ENCODE measurements at regions of chr16 and their contacts with region 1.

Region 1: GRCh38 chr16:75110637-75111513 is 5.7 kb downstream of the LDHD start:
- DNase-seq: peak; percentile 89
- ATAC-seq: peak; percentile 59 to 72

Region 2: GRCh38 chr16:74813109-74813641 is 297.7 kb before region 1 on chr16:
- intact Hi-C with region 1: loop called in 1 of 2 experiments (anchors 10 kb)
- DNase-seq: peak; percentile 72
- ATAC-seq: peak; percentile 98 to 100

Region 3: DNA sequence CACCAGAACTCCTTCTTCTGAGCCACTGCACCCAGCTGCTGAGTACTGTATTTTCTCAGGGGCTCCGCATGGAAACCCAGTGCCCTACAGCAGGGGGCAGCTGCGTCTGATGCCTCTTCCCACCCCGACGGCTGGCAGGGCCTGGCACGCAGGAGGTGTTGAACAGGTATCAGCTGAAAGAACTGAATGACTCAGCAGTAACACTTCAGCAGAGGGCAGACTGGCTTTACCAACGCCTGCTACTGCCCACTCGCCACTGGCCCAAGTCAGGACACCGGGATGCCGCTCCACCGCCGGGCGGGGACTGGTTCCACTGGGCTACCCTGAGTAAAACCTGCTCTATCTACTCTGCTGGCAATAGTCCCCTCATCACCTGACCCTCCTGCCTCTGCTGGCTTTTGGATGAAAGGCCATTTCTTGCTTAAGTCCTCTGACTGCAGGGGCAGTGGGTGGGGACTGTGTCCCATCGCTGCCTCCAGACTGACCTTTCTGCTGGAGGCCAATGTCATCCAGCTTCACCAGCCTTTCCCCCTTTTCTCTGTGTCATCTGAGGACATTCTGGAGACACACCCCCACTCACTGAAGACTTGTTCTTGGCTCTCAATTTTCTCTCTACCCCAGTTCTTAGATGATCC is 235.8 kb before region 1 on chr16:
- intact Hi-C with region 1: loop called in 1 of 2 experiments (anchors 10 kb)
- DNase-seq: peak; percentile 28
- ATAC-seq: peak; percentile 50 to 81

Region 4: DNA sequence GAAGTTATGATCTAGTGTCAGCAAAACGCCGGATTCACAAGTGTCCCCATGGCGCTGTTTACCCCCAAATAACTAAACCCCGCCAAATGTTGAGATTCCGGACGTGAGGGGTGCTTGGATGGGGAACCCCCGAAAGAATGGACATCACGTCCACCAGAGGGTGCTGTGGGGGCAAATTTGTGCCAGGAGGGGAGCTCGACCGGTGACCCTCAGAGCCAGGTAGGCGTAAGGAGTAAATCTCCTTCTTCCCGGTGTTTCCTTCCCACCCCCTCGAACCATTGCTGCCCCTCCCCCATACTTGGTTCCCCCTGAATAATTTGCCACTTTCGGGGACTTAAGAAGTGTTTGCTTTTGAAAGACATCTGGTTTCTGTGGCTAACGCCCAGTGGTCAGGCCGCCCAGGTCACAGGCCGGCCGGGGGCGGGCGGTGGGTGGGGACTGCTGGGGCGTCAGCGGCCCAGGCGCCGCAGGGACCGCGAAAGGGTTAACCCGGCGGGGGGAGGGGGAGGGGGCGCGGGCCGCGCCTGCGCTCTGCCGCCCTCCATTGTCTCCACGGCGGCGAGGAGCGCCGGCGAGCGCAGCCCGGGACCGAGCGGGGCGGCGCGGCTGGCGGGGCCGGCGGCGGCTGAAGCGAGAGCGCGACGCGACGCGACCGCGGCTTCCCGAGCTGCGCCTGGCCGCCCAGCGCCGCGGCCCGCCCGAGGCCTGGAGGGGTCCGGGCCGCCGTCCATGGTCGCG is 112.2 kb before region 1 on chr16 and contains the start of gene ZNRF1:
- intact Hi-C with region 1: loop called (anchors 1 to 2 kb)
- DNase-seq: peak; percentile 87
- ATAC-seq: peak; percentile 86 to 88
- total RNA-seq, gene ZNRF1: 16.7 to 17.5 TPM

Region 5: DNA sequence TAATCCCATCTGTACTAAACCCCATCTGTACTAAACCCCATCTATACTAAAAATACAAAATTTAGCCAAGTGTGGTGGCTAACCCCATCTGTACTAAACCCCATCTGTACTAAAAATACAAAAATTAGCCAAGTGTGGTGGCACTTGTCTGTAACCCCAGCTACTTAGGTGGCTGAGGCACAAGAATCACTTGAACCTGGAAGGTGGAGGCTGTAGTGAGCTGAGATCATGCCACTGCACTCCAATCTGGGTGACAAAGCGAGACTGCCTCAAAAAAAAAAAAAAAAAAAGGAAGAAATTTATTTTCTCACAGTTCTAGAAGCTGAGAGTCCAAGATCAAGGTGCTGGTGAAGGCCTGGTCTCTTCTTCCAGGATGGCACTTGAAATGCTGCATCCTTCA is 49.5 kb after region 1 on chr16:
- intact Hi-C with region 1: no loop called
- DNase-seq: no peak
- ATAC-seq: no peak

Measured in left cardiac atrium (tissue), 4 donors.